ENCODE measurements at regions of chr3 and their contacts with region 1.

Region 1: GRCh38 chr3:119240591-119241434 is at the start of gene B4GALT4:
- DNase-seq: peak; percentile 73
- ATAC-seq: peak; percentile 95
- H3K4me3 ChIP-seq: peak within 1 kb of the TSS; percentile 72 to 85 (median 82)
- H3K27ac ChIP-seq: peak within 1 kb of the TSS; percentile 98
- H3K4me1 ChIP-seq: peaks cover 20% of the 10 kb centered on the region
- H3K27me3 ChIP-seq: no peaks in the 10 kb centered on the region
- CTCF ChIP-seq: 0 out of 2 replicates have a peak, but pooled peaks have one; percentile 16
- EP300 ChIP-seq: no peak
- POLR2A ChIP-seq: peak; percentile 80 to 85
- RAD21 ChIP-seq: peak; percentile 46; the same call in 1 of the 2 replicates
- total RNA-seq, gene B4GALT4: 23.8 and 29.0 TPM in 2 replicates

Region 2: DNA sequence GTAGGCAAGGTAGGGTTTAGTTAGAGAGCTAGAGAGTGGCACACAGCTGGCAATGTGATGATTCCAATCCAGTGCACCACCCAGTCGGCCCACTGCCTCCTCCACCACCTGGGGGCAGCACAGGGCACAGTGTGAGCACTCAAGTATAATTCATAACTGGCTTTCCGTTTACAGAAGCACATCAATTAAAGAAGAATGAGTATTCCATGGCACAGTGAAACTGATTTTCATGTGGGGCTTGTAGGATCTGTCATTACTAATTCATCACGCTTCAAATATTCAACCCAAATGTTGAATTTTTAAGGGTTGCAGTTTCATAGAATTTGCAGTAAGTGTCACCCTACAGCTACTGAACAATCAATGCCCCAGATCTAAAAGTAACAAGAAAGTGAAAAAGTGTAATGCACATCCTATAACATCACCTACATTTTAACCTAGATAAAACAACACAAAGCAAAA is 356.0 kb before region 1 on chr3:
- CTCF ChIA-PET with region 1: no interaction called
- POLR2A ChIA-PET with region 1: no interaction called
- in situ Hi-C with region 1: no loop called
- intact Hi-C with region 1: loop called (anchors 2 kb)
- DNase-seq: peak; percentile 18
- ATAC-seq: peak; percentile 96
- H3K4me3 ChIP-seq: no peak overlapping the region
- H3K27ac ChIP-seq: no peak overlapping the region
- H3K4me1 ChIP-seq: no peaks in the 10 kb centered on the region
- H3K27me3 ChIP-seq: peaks cover 0 to 4% of the 10 kb centered on the region in 2 experiments; a peak in 1 of 5 replicates
- CTCF ChIP-seq: peak; percentile 72
- EP300 ChIP-seq: no peak
- POLR2A ChIP-seq: no peak
- RAD21 ChIP-seq: no peak

Region 3: GRCh38 chr3:119145500-119146191 is 95.2 kb before region 1 on chr3 and contains the start of gene TEX55:
- CTCF ChIA-PET with region 1: interaction called, 18 read pairs
- POLR2A ChIA-PET with region 1: interaction called, 3 read pairs
- in situ Hi-C with region 1: loop called (anchors 5 kb)
- intact Hi-C with region 1: loop called (anchors 1 kb)
- DNase-seq: peak; percentile 30
- ATAC-seq: peak; percentile 97
- H3K4me3 ChIP-seq: no peak within 1 kb of the TSS
- H3K27ac ChIP-seq: no peak within 1 kb of the TSS
- H3K4me1 ChIP-seq: no peaks in the 10 kb centered on the region
- H3K27me3 ChIP-seq: no peaks in the 10 kb centered on the region
- CTCF ChIP-seq: peak; percentile 79
- EP300 ChIP-seq: no peak
- POLR2A ChIP-seq: no peak
- RAD21 ChIP-seq: peak; percentile 44; the same call in 1 of the 2 replicates
- total RNA-seq, gene TEX55: not detected in 2 replicates

Region 4: DNA sequence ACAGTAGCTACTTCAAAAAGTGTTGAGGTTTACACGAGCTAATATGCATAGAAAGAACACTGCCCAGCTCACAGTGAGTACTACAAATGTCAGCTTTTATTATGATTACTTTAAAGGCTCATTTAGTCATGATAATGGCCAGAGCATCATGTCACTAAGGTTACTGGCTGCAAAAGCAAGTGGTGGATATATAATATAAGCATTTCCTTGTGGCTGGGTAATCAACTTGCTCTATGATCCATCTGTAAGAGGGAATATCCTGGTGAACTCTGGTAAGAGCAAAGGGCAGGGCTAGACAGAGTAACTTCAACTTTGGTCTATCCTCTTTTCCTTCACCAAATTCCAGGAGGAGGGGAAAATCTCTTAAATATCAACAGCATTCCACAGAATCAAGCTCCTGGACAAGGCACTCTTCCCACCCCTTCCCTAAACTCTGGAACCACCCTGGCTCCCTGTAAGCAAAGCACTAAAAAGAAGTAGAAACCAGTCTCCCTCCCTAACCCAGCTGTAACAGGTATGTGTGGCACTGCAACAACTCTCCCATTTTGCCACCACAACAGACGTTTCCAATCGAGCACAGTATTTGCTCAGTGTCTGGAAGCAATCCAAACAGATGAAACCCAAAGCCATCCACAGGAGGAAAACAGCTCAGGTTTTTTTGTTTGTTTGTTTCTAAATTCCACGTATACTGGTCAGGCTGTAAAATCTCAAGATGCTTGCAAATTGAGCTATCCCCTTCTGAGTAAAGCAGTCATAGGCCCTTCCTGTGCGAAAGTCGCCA is 13.6 kb before region 1 on chr3:
- CTCF ChIA-PET with region 1: no interaction called
- POLR2A ChIA-PET with region 1: interaction called, 10 read pairs
- in situ Hi-C with region 1: no loop called
- intact Hi-C with region 1: no loop called
- DNase-seq: peak; percentile 15
- ATAC-seq: peak; percentile 79
- H3K4me3 ChIP-seq: no peak overlapping the region
- H3K27ac ChIP-seq: peak overlapping the region; percentile 56
- H3K4me1 ChIP-seq: peaks cover 20% of the 10 kb centered on the region
- H3K27me3 ChIP-seq: no peaks in the 10 kb centered on the region
- CTCF ChIP-seq: no peak
- EP300 ChIP-seq: no peak
- POLR2A ChIP-seq: no peak
- RAD21 ChIP-seq: no peak

Region 5: DNA sequence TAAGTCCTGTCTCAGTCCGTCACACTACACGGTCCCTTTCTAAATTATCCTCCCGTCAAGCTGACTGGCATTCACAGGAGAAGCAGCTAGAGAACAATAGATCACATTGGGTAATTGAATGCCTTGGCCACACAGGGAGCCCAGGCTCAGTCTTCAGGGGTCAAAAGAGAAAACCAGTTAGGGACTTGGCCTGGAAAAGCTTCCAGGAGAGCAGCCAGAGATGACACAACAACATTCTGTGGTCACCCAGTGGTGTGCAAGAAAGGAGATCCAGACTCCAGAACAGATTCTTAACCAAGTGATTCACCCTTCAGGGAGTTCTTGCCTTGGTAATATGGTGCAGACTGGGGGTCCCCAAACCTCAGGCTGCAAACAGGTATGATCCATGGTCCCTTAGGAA is 69.3 kb after region 1 on chr3:
- CTCF ChIA-PET with region 1: no interaction called
- POLR2A ChIA-PET with region 1: no interaction called
- in situ Hi-C with region 1: no loop called
- intact Hi-C with region 1: no loop called
- DNase-seq: no peak
- ATAC-seq: no peak
- H3K4me3 ChIP-seq: no peak overlapping the region
- H3K27ac ChIP-seq: no peak overlapping the region
- H3K4me1 ChIP-seq: no peaks in the 10 kb centered on the region
- H3K27me3 ChIP-seq: no peaks in the 10 kb centered on the region; a peak in 2 of 5 replicates
- CTCF ChIP-seq: no peak
- EP300 ChIP-seq: no peak
- POLR2A ChIP-seq: no peak
- RAD21 ChIP-seq: no peak

Region 6: GRCh38 chr3:119463171-119464169 is 222.7 kb after region 1 on chr3 and contains the start of gene TMEM39A:
- CTCF ChIA-PET with region 1: no interaction called
- POLR2A ChIA-PET with region 1: interaction called, 18 read pairs
- in situ Hi-C with region 1: no loop called
- intact Hi-C with region 1: no loop called
- DNase-seq: peak; percentile 97
- ATAC-seq: peak; percentile 98
- H3K4me3 ChIP-seq: peak within 1 kb of the TSS; percentile 89 to 97 (median 93)
- H3K27ac ChIP-seq: peak within 1 kb of the TSS; percentile 90
- H3K4me1 ChIP-seq: peaks cover 42% of the 10 kb centered on the region
- H3K27me3 ChIP-seq: no peaks in the 10 kb centered on the region; a peak in 1 of 5 replicates
- CTCF ChIP-seq: no peak
- EP300 ChIP-seq: no peak
- POLR2A ChIP-seq: peak; percentile 98 to 99
- RAD21 ChIP-seq: no peak; the same call in 1 of the 2 replicates
- total RNA-seq, gene TMEM39A: 32.9 and 55.8 TPM in 2 replicates

Measured in HepG2 (cell line).